Cardiac septum (tissue), 1 donor: ENCODE measurements at regions of chr1 and their contacts with region 1.

Region 1: GRCh38 chr1:151728151-151729054 is 7.1 kb downstream of the RIIAD1 start:
- DNase-seq: peak; percentile 70

Region 2: GRCh38 chr1:151611832-151612500 is 116.4 kb before region 1 on chr1 and contains the start of gene SNX27:
- intact Hi-C with region 1: loop called (anchors 5 kb)
- DNase-seq: peak; percentile 95
- total RNA-seq, gene SNX27: 33.5 TPM